CD14-positive monocyte (primary cell): ENCODE measurements at regions of chr19 and their contacts with region 1.

Region 1: DNA sequence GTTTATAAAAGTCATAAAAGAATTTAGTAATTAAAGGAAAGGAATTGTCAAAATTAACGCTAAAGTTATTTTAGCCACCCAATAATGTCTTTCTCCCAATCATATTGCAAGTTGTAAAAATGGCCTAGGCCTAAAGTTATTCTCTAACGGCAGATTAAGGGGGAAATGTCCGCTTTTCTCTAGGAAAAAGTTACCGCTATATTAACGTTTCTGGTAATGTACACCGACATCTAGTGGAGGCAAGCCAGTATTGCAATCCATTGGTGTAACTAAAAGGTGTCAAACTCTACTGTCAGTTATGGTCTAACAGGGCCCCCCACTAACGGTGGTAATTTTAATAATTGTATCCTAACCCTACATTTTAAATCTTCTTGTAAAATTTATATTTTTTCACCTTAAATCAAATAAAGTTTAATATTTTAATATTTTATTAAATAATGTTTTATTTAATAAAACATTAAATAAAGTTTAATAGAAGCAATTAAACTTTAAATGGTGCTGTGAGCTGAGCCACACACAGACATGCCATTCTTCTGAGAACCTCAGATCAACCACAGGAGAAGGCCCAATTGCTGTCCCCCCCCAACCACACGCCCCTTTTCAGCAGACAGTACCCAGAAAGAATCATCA is 35.9 kb upstream of the ZSCAN5A start:
- DNase-seq: peak; percentile 9 to 62 (median 44)
- H3K4me3 ChIP-seq: no peak overlapping the region
- H3K4me3 Mint-ChIP-seq: no peak overlapping the region
- H3K27ac ChIP-seq: no peak overlapping the region
- H3K27ac Mint-ChIP-seq: no peak overlapping the region
- H3K4me1 ChIP-seq: no peaks in the 10 kb centered on the region
- H3K4me1 Mint-ChIP-seq: peaks cover 3% of the 10 kb centered on the region
- H3K27me3 ChIP-seq: no peaks in the 10 kb centered on the region
- H3K27me3 Mint-ChIP-seq: peaks cover 0 to 2% (median 0%) of the 10 kb centered on the region in 3 donors
- CTCF ChIP-seq: peak; percentile 95

Region 2: DNA sequence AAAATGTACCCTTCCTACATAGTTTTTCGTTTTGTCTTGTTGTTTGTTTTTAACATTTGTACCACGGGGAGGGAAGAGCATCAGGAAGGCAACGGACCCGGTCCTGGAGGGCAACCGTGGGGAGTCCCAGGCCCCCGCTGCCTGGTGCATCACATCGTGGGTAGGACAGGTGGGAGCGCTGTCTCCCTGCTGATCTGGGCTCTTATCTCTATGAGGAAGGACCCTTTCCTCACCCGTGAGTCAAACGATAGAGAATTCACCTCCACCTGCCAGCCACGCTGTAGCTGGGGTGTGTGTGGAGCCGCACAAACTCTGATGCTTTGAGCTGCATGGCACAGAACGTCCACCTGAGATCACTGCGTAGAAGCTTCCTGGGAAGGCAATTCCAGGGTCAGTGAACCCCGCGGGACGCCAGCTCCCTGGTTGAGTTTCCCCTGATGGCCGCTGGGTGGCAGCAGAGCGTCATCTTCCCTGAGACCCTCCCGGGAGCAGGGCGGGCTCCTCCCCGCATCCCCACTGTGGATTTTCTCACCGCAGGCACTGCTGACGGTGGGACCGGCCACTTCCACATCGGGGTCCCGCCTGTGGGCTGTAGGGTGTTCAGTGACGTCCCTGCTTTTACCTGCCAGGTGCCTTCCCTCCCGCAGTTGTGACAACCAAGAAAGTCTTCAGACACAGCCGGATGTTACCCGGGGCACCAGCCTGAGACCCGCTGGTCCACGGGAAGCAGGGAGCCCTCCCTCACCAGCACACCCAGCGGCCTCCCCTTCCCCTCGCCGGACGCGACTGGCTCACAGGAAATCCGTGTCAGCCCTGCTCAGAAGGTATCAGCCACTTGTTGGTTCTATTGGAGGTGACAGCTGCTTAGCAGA is 284.1 kb before region 1 on chr19:
- intact Hi-C with region 1: loop called in 1 of 2 experiments (anchors 10 kb)
- DNase-seq: peak; percentile 23 to 52 (median 48)
- H3K4me3 ChIP-seq: no peak overlapping the region
- H3K4me3 Mint-ChIP-seq: peak overlapping the region; percentile 37 to 60
- H3K27ac ChIP-seq: no peak overlapping the region
- H3K27ac Mint-ChIP-seq: no peak overlapping the region
- H3K4me1 ChIP-seq: peaks cover 7 to 8% of the 10 kb centered on the region in 2 donors
- H3K4me1 Mint-ChIP-seq: peaks cover 9% of the 10 kb centered on the region
- H3K27me3 ChIP-seq: peaks cover 0 to 8% of the 10 kb centered on the region in 2 donors
- H3K27me3 Mint-ChIP-seq: peaks cover 10 to 13% (median 11%) of the 10 kb centered on the region in 3 donors
- CTCF ChIP-seq: peak; percentile 97

Region 3: DNA sequence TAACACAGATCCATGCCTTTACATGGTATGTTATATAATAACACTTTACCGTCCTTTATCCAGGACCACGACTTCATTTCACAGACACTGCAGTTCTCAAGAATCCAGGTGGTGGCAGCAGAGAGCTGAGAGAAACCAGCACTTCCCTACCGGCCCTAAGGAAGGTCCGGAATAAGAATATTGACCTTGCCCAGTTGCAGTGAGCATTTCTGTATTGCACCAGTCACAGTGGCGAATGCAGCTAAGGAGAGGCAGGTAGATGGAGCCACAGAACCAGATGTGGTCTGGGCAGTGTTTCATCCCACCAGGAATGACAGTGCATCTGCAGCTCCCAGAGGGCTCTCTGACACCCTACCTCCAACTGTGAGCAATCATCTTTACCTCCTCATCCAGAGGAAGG is 274.0 kb before region 1 on chr19:
- intact Hi-C with region 1: loop called in 1 of 2 experiments (anchors 5 kb)
- DNase-seq: peak; percentile 34 to 56 (median 56)
- H3K4me3 ChIP-seq: no peak overlapping the region
- H3K4me3 Mint-ChIP-seq: no peak overlapping the region
- H3K27ac ChIP-seq: no peak overlapping the region
- H3K27ac Mint-ChIP-seq: no peak overlapping the region
- H3K4me1 ChIP-seq: peaks cover 9% of the 10 kb centered on the region in 2 donors
- H3K4me1 Mint-ChIP-seq: peaks cover 9% of the 10 kb centered on the region
- H3K27me3 ChIP-seq: no peaks in the 10 kb centered on the region
- H3K27me3 Mint-ChIP-seq: peaks cover 5 to 20% (median 11%) of the 10 kb centered on the region in 3 donors
- CTCF ChIP-seq: peak; percentile 94

Region 4: DNA sequence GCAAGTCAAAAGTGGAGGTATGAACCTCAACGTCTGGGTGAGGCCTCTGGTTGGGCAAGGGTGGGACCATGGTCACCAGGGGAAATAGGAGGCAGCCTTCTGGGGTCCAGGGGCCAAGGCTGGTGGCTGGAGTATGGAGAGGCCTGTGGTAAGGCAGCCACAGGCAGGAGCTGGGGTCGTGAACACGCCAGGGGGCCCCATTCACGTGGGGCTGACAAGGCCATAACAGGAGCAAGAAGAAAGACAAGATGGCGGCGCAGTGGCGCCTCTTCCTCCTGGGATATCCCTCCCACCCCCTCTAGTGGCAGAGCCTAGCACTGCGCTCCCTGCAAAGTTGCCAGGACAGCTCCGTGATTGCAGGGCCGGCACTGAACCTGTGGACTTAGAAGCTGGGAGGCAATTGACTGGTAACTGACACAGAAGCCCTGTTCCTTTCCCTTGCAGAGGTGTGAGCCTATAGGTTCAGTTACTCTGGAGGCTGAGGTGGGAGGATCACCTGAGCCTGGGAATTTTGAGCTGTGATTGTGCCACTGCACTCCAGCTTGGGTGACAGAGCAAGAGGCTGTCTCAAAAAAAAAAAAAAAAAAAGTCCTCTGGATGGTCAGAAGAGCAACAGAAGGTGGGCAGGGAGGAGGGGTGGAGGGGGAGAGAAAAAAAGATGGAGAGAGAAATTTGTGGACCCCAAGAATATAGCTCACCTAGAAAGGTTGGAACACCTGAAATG is 97.7 kb before region 1 on chr19:
- intact Hi-C with region 1: loop called in 1 of 2 experiments (anchors 5 kb)
- DNase-seq: peak; percentile 69 to 75 (median 72)
- H3K4me3 ChIP-seq: no peak overlapping the region
- H3K4me3 Mint-ChIP-seq: peak overlapping the region in 1 of 2 donors; percentile 48
- H3K27ac ChIP-seq: no peak overlapping the region
- H3K27ac Mint-ChIP-seq: peak overlapping the region in 1 of 7 donors; percentile 70
- H3K4me1 ChIP-seq: no peaks in the 10 kb centered on the region
- H3K4me1 Mint-ChIP-seq: peaks cover 3% of the 10 kb centered on the region
- H3K27me3 ChIP-seq: no peaks in the 10 kb centered on the region
- H3K27me3 Mint-ChIP-seq: no peaks in the 10 kb centered on the region
- CTCF ChIP-seq: peak; percentile 86

Region 5: GRCh38 chr19:56301182-56301581 is 49.3 kb before region 1 on chr19:
- intact Hi-C with region 1: loop called in 1 of 2 experiments (anchors 5 kb)
- DNase-seq: no peak
- H3K4me3 ChIP-seq: peak overlapping the region in 1 of 3 experiments; percentile 20
- H3K4me3 Mint-ChIP-seq: no peak overlapping the region
- H3K27ac ChIP-seq: peak overlapping the region in 1 of 2 donors; percentile 55
- H3K27ac Mint-ChIP-seq: peak overlapping the region in 2 of 7 donors; percentile 13 to 75
- H3K4me1 ChIP-seq: peaks cover 8 to 10% of the 10 kb centered on the region in 2 donors
- H3K4me1 Mint-ChIP-seq: peaks cover 7% of the 10 kb centered on the region
- H3K27me3 ChIP-seq: no peaks in the 10 kb centered on the region
- H3K27me3 Mint-ChIP-seq: peaks cover 0 to 2% (median 1%) of the 10 kb centered on the region in 3 donors
- CTCF ChIP-seq: no peak